Activated naive CD4-positive, alpha-beta T cell treated with anti-CD3 and anti-CD28 coated beads for 36 hours (primary cell): ENCODE measurements at regions of chr19 and their contacts with region 1.

Region 1: DNA sequence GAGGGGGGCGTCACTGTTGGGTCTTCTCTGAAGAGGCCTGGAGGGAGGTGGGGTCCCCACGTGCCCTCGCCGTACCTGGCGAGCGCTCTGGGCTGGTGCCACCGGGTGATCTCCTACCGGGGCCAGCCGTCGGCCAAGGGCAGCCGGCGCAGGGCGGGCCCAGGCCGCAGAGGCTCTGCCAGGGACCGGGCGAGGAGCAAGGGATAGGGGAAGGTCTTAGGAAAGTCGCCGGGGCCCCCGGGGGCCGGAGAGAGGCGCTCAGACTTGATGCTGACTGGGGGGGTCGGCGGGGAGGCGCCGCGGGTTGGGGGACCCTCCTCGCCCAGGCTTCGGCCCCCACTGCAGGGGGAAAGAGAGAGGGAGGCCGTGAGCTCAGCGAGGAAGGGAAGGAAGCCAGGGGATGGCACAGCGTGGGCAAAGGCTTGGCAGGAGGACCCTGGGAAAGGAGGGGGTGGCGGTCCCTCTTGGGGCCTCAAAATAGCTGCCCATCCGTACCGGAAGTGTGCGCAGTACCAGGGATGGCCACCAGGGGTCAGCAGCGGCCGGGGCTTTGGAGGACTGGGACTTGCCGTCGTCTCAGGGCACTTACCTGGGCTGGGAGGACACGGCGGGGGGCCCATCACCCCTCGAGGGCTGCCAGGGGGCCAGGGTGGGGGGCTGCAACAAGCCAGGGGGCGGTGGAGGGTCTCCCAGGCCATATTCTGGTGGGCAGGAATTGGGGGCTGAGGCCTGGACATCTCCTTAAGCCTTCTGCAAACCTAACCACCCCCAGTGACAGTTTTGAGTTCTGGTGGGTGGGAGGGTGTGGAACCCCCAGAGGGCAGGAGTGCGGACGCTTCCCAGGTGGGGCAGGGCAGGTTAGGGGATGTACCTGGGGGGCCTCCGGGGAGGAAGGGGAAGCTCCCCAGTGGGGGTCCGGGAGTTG is 7.7 kb upstream of the TMEM161A start:
- DNase-seq: peak; percentile 92
- H3K4me3 Mint-ChIP-seq: no peak overlapping the region
- H3K27ac Mint-ChIP-seq: no peak overlapping the region
- H3K4me1 Mint-ChIP-seq: no peaks in the 10 kb centered on the region
- H3K27me3 Mint-ChIP-seq: no peaks in the 10 kb centered on the region

Region 2: DNA sequence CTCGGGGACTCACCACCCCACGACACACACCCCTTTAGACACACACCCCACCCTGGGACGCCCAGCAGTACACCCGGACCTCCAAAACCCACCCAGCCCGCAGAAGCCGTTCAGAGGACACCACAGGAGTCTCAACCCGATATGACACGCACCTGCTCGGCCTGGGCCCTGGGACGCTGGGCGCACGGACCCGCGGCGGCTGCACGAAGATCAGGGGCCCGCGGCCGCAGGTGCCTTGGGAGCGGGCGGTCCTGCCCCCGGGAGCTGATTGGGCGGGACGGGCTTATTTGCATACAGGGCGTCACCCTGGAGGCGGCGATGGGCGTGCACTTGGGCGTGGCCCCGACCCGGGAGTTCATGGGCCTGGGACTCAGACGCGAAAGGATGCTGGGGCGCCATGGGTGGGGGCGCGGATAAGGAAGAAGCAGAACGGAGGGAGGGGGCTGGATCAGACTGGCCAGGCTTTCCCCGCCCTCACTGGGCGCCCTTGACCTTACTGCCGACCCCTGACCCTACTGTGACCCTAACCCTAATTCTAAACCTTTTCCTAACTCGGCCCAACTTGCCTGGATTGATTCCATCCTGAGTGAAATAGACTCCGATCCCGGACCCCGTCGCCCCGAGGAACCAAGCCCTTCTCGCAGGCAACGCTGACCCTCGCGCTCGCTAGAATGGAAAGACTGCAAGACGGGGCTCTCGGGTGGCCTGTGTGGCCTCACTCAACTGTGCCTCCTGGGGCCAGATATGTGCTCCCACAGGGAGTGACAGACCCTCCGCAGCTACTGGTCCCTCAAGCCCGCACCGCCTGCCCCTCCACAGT is 24.3 kb after region 1 on chr19 and contains the start of gene MEF2B:
- CTCF ChIA-PET with region 1: interaction called, 27 read pairs
- intact Hi-C with region 1: loop called (anchors 1 kb)
- DNase-seq: peak; percentile 74
- H3K4me3 Mint-ChIP-seq: peak within 1 kb of the TSS; percentile 28
- H3K27ac Mint-ChIP-seq: no peak within 1 kb of the TSS
- H3K4me1 Mint-ChIP-seq: peaks cover 11% of the 10 kb centered on the region
- H3K27me3 Mint-ChIP-seq: no peaks in the 10 kb centered on the region
- total RNA-seq, gene MEF2B: 3.1 to 4.6 TPM

Region 3: DNA sequence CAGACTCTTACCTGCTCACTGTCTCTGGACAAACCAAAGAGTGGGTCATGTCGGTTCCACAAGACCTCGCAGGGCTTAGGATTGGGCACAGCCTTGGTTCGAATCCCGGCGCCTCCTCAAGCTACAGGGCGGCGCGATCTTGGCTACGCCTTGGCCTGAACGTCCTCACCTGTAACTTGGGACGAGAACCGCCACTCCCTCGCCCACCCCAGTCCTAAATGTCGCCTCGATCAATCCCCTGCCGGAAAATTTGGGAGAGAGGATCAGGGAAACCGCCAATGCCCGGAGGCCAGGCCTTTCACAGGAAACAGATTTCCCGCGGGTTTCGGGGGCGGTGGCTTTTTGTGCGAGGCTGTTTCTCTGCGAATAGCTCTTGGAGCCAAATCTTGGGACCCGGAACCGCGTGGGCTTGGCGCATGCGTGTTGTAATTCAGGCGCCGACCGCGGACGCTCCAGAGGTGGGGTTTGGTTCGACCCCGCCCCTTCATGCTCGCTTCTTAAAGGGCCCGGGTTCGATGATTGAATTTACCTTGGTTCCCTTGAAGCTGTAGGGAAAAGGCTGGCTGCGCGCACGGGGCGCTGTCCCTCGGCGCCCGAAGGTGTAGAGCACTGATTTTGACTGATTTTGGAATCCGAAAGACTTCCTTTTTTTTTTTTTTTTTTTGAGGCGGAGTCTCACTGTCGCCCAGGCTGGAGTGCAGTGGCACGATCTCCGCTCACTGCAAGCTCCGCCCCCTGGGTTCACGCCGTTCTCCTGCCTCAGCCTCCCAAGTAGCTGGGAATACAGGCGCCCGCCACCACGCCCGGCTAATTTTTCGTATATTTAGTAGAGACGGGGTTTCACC is 57.3 kb after region 1 on chr19 and contains the start of gene NR2C2AP:
- CTCF ChIA-PET with region 1: interaction called, 10 read pairs
- intact Hi-C with region 1: no loop called
- DNase-seq: peak; percentile 93
- H3K4me3 Mint-ChIP-seq: peak within 1 kb of the TSS; percentile 90
- H3K27ac Mint-ChIP-seq: peak within 1 kb of the TSS; percentile 89
- H3K4me1 Mint-ChIP-seq: peaks cover 33% of the 10 kb centered on the region
- H3K27me3 Mint-ChIP-seq: peaks cover 2% of the 10 kb centered on the region
- total RNA-seq, gene NR2C2AP: 32.4 to 34.2 TPM

Region 4: DNA sequence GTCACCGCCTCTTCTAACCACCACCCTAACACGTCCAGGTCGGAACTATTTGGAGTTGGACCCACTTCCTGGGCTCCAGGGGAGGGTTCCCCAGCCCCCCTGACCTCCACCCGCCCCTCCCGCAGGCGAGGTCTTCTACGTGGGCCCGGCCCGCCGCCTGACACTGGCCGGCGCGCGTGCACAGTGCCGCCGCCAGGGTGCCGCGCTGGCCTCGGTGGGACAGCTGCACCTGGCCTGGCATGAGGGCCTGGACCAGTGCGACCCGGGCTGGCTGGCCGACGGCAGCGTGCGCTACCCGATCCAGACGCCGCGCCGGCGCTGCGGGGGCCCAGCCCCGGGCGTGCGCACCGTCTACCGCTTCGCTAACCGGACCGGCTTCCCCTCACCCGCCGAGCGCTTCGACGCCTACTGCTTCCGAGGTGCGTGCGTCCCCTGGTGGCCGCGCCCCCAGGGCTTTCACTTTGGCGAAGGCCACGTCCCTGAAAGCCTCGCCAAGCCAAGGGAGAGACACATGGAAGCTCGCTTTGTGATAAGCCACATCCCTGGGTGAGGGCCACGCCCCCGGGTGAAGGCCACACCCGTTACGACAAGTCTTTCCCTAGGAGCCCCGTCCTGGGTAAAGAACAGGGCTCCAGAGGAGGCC is 79.0 kb after region 1 on chr19:
- CTCF ChIA-PET with region 1: interaction called, 6 read pairs
- intact Hi-C with region 1: loop called (anchors 1 kb)
- DNase-seq: peak; percentile 81
- H3K4me3 Mint-ChIP-seq: peak overlapping the region; percentile 56
- H3K27ac Mint-ChIP-seq: no peak overlapping the region
- H3K4me1 Mint-ChIP-seq: peaks cover 2% of the 10 kb centered on the region
- H3K27me3 Mint-ChIP-seq: peaks cover 12% of the 10 kb centered on the region

Region 5: DNA sequence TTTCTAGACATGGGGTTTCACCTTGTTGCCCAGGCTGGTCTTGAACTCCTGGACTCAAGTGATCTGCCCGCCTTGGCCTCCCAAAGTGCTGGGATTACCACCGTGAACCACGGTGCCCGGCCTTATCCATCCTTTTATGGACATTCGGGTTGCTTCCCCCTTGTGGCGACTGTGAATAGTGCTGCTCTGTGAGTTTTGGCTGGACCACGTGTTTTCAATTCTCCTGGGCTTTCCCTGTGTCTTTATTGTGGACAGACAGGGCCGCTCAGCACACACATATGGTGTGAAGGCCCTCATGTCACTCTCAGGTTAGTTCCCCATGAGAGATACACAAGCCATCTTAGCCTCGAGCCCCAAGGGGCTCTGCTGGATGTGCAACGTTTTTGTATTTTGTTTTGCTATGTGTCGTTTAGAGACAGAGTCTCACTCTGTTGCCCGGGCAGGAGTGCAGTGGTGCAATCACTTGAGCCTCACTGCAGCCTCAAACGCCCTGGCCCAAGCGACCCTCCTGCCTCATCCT is 215.2 kb after region 1 on chr19:
- CTCF ChIA-PET with region 1: interaction called, 7 read pairs
- intact Hi-C with region 1: loop called (anchors 2 kb)
- DNase-seq: peak; percentile 92
- H3K4me3 Mint-ChIP-seq: no peak overlapping the region
- H3K27ac Mint-ChIP-seq: no peak overlapping the region
- H3K4me1 Mint-ChIP-seq: peaks cover 27% of the 10 kb centered on the region
- H3K27me3 Mint-ChIP-seq: no peaks in the 10 kb centered on the region